HEK293T (cell line): ENCODE measurements at regions of chr17 and their contacts with region 1.

Region 1: GRCh38 chr17:48791128-48792032 is 25.6 kb downstream of the TTLL6 start:
- DNase-seq: peak; percentile 81

Region 2: DNA sequence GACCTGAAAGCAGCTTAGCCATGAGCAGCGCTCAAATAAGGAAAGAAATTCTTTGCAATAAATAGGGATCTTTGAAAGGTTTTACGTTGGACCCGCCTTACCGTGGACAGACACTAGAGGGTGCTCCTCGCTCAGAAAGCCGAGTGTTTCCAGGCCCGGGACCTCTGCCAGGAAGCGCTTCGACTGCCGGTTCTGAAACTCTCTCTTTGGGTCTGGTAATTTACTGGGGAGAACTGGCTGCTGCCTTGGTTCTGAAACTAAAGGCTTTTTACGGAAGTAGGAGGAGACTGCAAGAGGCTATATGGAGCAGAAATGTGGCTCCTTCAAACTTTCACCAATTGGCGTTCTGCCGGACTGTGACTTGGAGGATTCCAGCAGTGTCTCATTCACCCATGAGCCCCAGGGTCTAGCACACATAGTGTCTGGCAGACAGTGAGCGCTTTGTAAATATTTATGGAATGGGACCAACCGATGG is 119.6 kb before region 1 on chr17:
- CTCF ChIA-PET with region 1: interaction called, 82 read pairs
- POLR2A ChIA-PET with region 1: interaction called, 5 read pairs
- DNase-seq: peak; percentile 78

Region 3: DNA sequence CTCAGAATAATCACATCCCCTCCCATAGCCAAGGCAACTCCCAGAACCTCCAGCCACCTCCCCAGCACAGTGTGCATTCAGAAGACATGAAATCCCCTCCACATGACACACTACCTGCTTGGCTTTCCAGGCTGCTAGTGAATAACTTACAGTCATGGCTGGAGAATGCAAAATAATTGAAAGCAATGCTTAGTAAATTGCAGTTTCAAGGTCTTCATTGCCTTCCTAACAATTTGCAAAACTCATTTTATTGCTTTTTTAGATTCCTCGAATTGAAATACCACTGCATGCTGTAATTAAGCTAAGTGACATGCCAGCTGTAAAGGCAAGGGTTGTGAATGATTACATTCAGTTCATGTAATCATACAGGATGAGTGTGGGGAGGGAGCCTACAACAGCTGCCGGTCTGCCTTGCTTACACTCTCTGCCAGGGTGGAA is 33.8 kb before region 1 on chr17:
- CTCF ChIA-PET with region 1: interaction called, 12 read pairs
- POLR2A ChIA-PET with region 1: no interaction called
- DNase-seq: peak; percentile 7